Heart left ventricle (tissue), 16 donors: ENCODE measurements at regions of chr1 and their contacts with region 1.

Region 1: DNA sequence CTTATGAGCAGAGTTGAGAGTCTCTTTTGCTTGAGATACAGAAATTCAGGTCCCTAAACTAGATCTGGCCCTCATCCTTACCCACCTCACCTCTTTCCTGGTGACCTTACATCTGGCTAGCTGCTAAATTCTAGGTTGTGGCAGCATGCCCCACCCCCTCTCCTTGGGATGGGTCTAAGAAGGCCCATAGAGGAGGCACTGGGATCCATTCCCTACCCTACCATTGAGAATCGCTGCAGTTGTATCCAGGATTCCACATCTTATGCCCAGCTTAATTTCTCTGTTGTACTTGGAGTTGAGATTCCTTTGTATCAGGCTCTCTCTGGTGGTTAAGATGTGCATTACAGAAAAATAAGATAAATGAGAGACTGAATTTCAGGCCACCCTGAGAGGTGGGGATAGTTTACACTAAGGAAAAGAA is 9.5 kb upstream of the TMEM39B start:
- DNase-seq: no peak
- ATAC-seq: peak; percentile 22 to 67 (median 40)
- H3K4me3 ChIP-seq: no peak overlapping the region
- H3K27ac ChIP-seq: peak overlapping the region in 7 of 12 donors; percentile 3 to 54 (median 44)
- H3K4me1 ChIP-seq: peaks cover 0 to 28% (median 23%) of the 10 kb centered on the region in 12 donors
- H3K27me3 ChIP-seq: no peaks in the 10 kb centered on the region
- CTCF ChIP-seq: peak; percentile 37 to 69 (median 58)
- POLR2A ChIP-seq: no peak

Region 2: GRCh38 chr1:31663622-31664452 is 399.4 kb before region 1 on chr1:
- intact Hi-C with region 1: loop called in 3 of 10 experiments (anchors 10 kb)
- DNase-seq: peak; percentile 50 to 76 (median 58)
- ATAC-seq: peak; percentile 23 to 55 (median 42)
- H3K4me3 ChIP-seq: no peak overlapping the region
- H3K27ac ChIP-seq: no peak overlapping the region
- H3K4me1 ChIP-seq: peaks cover 0 to 25% (median 10%) of the 10 kb centered on the region in 12 donors
- H3K27me3 ChIP-seq: no peaks in the 10 kb centered on the region
- CTCF ChIP-seq: peak; percentile 85 to 96 (median 88)
- POLR2A ChIP-seq: no peak

Region 3: DNA sequence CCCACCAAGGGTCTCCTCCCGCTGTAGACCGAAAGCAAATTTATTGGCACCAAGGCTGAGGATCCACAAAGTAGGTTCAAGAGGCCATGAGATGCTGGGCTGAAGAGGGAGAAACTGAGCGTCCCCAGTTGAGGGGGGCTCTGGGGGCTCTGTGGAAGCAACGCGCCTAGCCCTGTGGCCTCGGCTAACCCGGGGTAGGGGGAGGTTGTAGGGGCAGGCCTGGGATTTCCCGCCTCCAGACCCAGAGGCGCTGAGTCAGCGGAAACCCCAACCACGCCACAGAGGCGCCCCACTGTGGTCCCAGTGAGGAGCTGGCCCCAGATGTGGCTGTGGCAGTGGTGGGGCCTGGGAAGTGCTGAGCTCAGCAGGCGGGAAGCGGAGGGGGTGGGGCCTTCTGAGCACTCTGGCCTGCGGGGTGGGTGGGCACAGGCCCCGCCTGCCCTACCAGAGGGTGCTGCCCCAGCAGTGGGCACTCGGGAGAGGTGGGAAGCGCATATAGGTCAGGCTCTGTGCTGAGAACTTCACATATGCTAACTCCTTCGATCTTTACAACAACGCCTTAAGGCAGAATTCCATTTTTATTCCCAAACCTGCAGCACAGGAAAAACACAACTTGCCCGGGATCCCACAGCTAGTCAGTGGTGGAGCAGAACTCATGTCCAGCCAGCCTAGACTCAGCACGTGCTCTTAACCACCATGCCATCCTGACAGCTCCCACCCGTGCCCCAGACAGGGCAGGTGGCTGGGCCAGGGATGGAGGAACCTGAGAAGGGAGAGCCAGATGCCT is 358.0 kb before region 1 on chr1:
- intact Hi-C with region 1: no loop called
- DNase-seq: peak; percentile 42 to 77 (median 56)
- ATAC-seq: peak in 2 of 4 donors; percentile 19 to 23
- H3K4me3 ChIP-seq: peak overlapping the region in 8 of 12 donors; percentile 12 to 63 (median 54)
- H3K27ac ChIP-seq: peak overlapping the region in 11 of 12 donors; percentile 26 to 88 (median 75)
- H3K4me1 ChIP-seq: peaks cover 5 to 56% (median 35%) of the 10 kb centered on the region in 12 donors
- H3K27me3 ChIP-seq: peaks cover 0 to 23% (median 0%) of the 10 kb centered on the region in 9 donors
- CTCF ChIP-seq: peak in 4 of 12 donors; percentile 9 to 31 (median 20)
- POLR2A ChIP-seq: no peak

Region 4: GRCh38 chr1:31739346-31739745 is 323.9 kb before region 1 on chr1:
- intact Hi-C with region 1: no loop called
- DNase-seq: no peak
- ATAC-seq: no peak
- H3K4me3 ChIP-seq: no peak overlapping the region
- H3K27ac ChIP-seq: no peak overlapping the region
- H3K4me1 ChIP-seq: no peaks in the 10 kb centered on the region
- H3K27me3 ChIP-seq: no peaks in the 10 kb centered on the region
- CTCF ChIP-seq: no peak
- POLR2A ChIP-seq: no peak

Region 5: GRCh38 chr1:31815752-31816500 is 247.3 kb before region 1 on chr1 and contains the start of gene SPOCD1:
- intact Hi-C with region 1: loop called in 1 of 10 experiments (anchors 10 kb)
- DNase-seq: peak; percentile 42 to 86 (median 63)
- ATAC-seq: peak; percentile 51 to 89 (median 74)
- H3K4me3 ChIP-seq: no peak within 1 kb of the TSS
- H3K27ac ChIP-seq: no peak within 1 kb of the TSS
- H3K4me1 ChIP-seq: peaks cover 0 to 4% (median 0%) of the 10 kb centered on the region in 12 donors
- H3K27me3 ChIP-seq: no peaks in the 10 kb centered on the region
- CTCF ChIP-seq: peak; percentile 26 to 68 (median 46)
- POLR2A ChIP-seq: no peak
- total RNA-seq, gene SPOCD1: 0.19 to 2.9 (median 0.46) TPM in 5 of 9 donors, not detected in the others

Region 6: GRCh38 chr1:31977385-31978131 is 85.7 kb before region 1 on chr1:
- intact Hi-C with region 1: loop called in 1 of 10 experiments (anchors 10 kb)
- DNase-seq: no peak
- ATAC-seq: peak in 3 of 4 donors; percentile 53 to 68 (median 63)
- H3K4me3 ChIP-seq: no peak overlapping the region
- H3K27ac ChIP-seq: no peak overlapping the region
- H3K4me1 ChIP-seq: peaks cover 0 to 12% (median 2%) of the 10 kb centered on the region in 12 donors
- H3K27me3 ChIP-seq: no peaks in the 10 kb centered on the region
- CTCF ChIP-seq: peak in 7 of 12 donors; percentile 12 to 39 (median 28)
- POLR2A ChIP-seq: no peak

Region 7: GRCh38 chr1:32005522-32005921 is 57.7 kb before region 1 on chr1:
- intact Hi-C with region 1: loop called in 1 of 10 experiments (anchors 10 kb)
- DNase-seq: no peak
- ATAC-seq: no peak
- H3K4me3 ChIP-seq: no peak overlapping the region
- H3K27ac ChIP-seq: no peak overlapping the region
- H3K4me1 ChIP-seq: peaks cover 0 to 39% (median 0%) of the 10 kb centered on the region in 12 donors
- H3K27me3 ChIP-seq: no peaks in the 10 kb centered on the region
- CTCF ChIP-seq: no peak
- POLR2A ChIP-seq: no peak